Activated CD8-positive, alpha-beta T cell treated with anti-CD3 and anti-CD28 coated beads, Interleukin-2, amount 10 ng/mL, durations not matched to agents 7 days and 5 days (primary cell): ENCODE measurements at regions of chr20 and their contacts with region 1.

Region 1: GRCh38 chr20:10427060-10427692 is 6.8 kb downstream of the MKKS start:
- DNase-seq: peak; percentile 60
- ATAC-seq: no peak
- H3K4me3 Mint-ChIP-seq: no peak overlapping the region
- H3K27ac Mint-ChIP-seq: no peak overlapping the region
- H3K4me1 Mint-ChIP-seq: peaks cover 28% of the 10 kb centered on the region
- H3K27me3 Mint-ChIP-seq: no peaks in the 10 kb centered on the region

Region 2: DNA sequence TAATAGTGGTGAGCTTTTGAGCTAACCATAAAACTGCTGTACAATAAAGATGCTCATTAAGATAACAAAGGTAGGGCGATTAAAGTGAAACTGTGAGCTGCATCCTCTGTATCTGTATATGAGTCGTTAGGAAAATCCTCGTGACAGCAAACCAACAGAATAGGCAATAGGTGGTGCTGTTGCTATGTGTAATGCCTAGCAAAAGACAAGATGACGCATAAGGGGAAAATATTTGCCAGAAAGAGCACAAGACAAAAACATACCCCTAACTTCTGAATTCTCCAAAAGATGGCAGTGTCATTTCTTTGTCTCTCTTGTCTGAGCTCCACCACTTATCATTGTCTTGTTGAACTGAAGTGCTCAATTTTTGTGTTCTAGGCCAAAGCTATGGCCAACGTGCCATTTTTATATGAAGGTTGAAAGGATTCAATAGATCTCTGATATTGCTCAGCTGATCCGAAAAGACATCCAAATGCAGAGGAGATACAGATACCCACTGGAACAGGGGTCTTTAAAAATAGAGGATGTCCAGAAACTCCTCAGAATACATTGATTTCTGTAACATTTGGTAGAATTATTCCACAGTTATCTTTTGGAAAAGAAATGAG is 448.7 kb before region 1 on chr20:
- CTCF ChIA-PET with region 1: interaction called, 35 read pairs
- POLR2A ChIA-PET with region 1: no interaction called
- DNase-seq: peak; percentile 53
- ATAC-seq: peak; percentile 81
- H3K4me3 Mint-ChIP-seq: no peak overlapping the region
- H3K27ac Mint-ChIP-seq: no peak overlapping the region
- H3K4me1 Mint-ChIP-seq: peaks cover 2% of the 10 kb centered on the region
- H3K27me3 Mint-ChIP-seq: peaks cover 11% of the 10 kb centered on the region

Region 3: GRCh38 chr20:10412591-10413408 is 14.4 kb before region 1 on chr20:
- CTCF ChIA-PET with region 1: interaction called, 26 read pairs
- POLR2A ChIA-PET with region 1: no interaction called
- DNase-seq: no peak
- ATAC-seq: no peak
- H3K4me3 Mint-ChIP-seq: no peak overlapping the region
- H3K27ac Mint-ChIP-seq: no peak overlapping the region
- H3K4me1 Mint-ChIP-seq: peaks cover 3% of the 10 kb centered on the region
- H3K27me3 Mint-ChIP-seq: no peaks in the 10 kb centered on the region

Region 4: GRCh38 chr20:10542442-10542841 is 115.3 kb after region 1 on chr20:
- CTCF ChIA-PET with region 1: no interaction called
- POLR2A ChIA-PET with region 1: no interaction called
- DNase-seq: no peak
- ATAC-seq: no peak
- H3K4me3 Mint-ChIP-seq: no peak overlapping the region
- H3K27ac Mint-ChIP-seq: no peak overlapping the region
- H3K4me1 Mint-ChIP-seq: peaks cover 21% of the 10 kb centered on the region
- H3K27me3 Mint-ChIP-seq: no peaks in the 10 kb centered on the region